ENCODE measurements at regions of chr17 and their contacts with region 1.

Region 1: GRCh38 chr17:42928714-42929496 is 28.3 kb downstream of the G6PC1 start:
- DNase-seq: peak; percentile 93 to 95
- ATAC-seq: peak; percentile 96 to 97
- H3K4me3 ChIP-seq: no peak overlapping the region
- H3K27ac ChIP-seq: peak overlapping the region; percentile 75 to 84
- H3K4me1 ChIP-seq: peaks cover 9% of the 10 kb centered on the region
- CTCF ChIP-seq: peak; percentile 74
- EP300 ChIP-seq: no peak
- POLR2A ChIP-seq: no peak
- RAD21 ChIP-seq: peak; percentile 82 to 84

Region 2: GRCh38 chr17:42677008-42677857 is 251.7 kb before region 1 on chr17:
- CTCF ChIA-PET with region 1: no interaction called
- POLR2A ChIA-PET with region 1: no interaction called
- DNase-seq: peak; percentile 100
- ATAC-seq: peak; percentile 45 to 64
- H3K4me3 ChIP-seq: peak overlapping the region; percentile 87
- H3K27ac ChIP-seq: peak overlapping the region; percentile 95 to 98
- H3K4me1 ChIP-seq: peaks cover 56% of the 10 kb centered on the region
- CTCF ChIP-seq: no peak
- EP300 ChIP-seq: peak in 1 of 2 experiments; percentile 18; a peak in 1 of 5 replicates
- POLR2A ChIP-seq: no peak
- RAD21 ChIP-seq: no peak; a peak in 2 of 5 replicates

Region 3: DNA sequence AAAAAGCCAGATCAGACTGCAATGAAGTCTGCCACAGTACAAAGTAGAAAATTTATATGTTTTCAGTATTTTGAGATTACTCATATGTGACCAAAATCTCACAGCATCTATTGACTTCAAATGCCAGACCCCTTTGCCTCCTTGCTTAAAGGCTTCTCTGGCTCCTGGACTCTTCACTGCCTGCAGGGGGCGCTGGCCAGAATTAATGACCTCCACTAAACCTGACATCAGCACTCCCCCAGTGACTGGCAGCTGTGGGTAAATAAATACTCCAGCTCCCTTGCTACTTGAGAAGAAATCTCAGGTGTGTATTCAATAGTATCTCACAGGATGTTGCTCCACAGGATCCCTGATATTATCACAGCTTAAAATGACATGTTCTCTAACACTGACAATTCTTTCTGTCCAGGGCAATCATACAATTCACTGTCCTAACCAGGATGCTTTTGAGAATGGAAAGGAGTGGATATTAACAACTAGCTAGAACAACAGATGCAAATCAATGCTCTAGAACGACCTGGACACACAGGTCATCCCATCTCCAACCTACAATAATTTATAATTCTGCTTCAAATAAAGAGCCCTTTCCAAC is 108.9 kb before region 1 on chr17:
- CTCF ChIA-PET with region 1: interaction called, 19 read pairs
- POLR2A ChIA-PET with region 1: interaction called, 8 read pairs
- DNase-seq: peak; percentile 84 to 85
- ATAC-seq: peak; percentile 44 to 66; a peak in 3 of 6 replicates
- H3K4me3 ChIP-seq: no peak overlapping the region
- H3K27ac ChIP-seq: no peak overlapping the region
- H3K4me1 ChIP-seq: peaks cover 21% of the 10 kb centered on the region
- CTCF ChIP-seq: peak; percentile 82
- EP300 ChIP-seq: no peak
- POLR2A ChIP-seq: no peak
- RAD21 ChIP-seq: peak; percentile 26 to 40; a peak in 2 of 5 replicates

Region 4: DNA sequence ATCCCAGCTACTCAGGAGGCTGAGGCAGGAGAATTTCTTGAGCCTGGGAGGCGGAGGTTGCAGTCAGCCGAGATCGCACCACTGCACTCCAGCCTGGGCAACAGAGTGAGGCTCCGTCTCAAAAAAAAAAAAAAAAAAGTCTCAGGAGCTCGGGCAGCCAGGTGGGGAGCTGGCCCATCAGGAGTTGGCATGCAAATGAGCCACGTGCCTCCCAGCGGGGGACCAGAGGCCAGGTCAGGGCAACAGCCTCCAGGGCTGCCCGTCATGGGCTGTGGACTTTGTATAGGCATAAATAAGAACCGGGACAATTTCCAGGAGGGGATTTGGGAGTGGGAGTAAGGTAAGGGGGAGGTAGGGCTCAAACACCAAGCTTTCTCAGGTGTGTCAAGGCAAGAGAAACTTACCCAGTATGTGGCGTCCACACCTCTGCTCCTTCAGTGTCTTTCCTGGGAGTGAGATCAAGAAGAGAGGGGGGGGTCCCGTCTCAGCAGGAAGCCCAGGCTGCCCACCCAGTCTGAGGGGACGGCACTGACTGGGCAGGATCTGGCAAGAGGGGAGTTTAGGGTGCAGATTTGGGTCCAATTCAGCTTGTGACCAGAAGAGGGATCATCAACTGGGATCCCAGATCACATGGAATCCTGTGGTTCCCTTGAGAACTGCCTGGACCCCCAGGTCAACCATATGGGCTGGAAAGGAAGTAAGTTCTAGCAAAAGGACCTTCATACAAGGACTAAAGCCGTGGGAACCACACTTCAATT is 50.6 kb before region 1 on chr17:
- CTCF ChIA-PET with region 1: interaction called, 18 read pairs
- POLR2A ChIA-PET with region 1: no interaction called
- DNase-seq: peak in 1 of 2 experiments; percentile 25
- ATAC-seq: peak; percentile 53 to 65; a peak in 4 of 6 replicates
- H3K4me3 ChIP-seq: no peak overlapping the region
- H3K27ac ChIP-seq: no peak overlapping the region
- H3K4me1 ChIP-seq: no peaks in the 10 kb centered on the region
- CTCF ChIP-seq: no peak
- EP300 ChIP-seq: no peak
- POLR2A ChIP-seq: no peak
- RAD21 ChIP-seq: no peak

Region 5: DNA sequence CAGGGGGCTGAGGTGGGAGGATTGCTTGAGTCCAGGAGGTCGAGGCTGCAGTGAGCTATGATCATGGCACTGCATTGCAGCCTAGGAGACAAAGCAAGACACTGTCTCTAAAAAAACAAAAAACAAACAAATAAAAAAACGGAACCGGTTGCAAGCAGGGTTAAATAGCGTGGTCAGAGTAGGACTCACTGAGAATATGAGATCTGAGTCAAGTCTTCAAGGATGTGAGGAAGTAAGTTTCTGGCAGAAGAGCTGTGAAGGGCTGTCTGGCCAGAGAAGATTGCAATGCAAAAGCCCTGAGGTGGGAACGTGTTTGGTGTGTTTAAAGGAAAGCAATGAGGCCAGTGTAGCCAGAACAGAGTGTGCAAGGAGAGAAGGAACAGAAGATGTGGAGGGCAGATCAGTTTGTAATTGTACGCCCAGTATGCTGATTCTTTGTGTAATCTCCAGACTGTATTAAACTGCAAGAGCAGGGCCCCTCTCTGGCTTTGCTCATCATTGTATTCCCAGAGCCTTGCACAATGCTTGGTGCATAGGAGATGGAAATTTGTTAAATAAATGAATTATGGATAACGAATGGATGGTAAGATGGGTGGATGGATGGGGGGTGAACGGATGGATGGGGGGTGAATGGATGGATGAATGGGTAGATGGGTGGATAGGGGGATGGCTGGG is 22.0 kb before region 1 on chr17:
- CTCF ChIA-PET with region 1: interaction called, 14 read pairs
- POLR2A ChIA-PET with region 1: no interaction called
- DNase-seq: no peak
- ATAC-seq: no peak
- H3K4me3 ChIP-seq: no peak overlapping the region
- H3K27ac ChIP-seq: no peak overlapping the region
- H3K4me1 ChIP-seq: no peaks in the 10 kb centered on the region
- CTCF ChIP-seq: no peak
- EP300 ChIP-seq: no peak
- POLR2A ChIP-seq: no peak
- RAD21 ChIP-seq: no peak

Region 6: GRCh38 chr17:42997984-42998938 is 69.4 kb after region 1 on chr17 and contains the start of gene RPL27:
- CTCF ChIA-PET with region 1: interaction called, 11 read pairs
- POLR2A ChIA-PET with region 1: interaction called, 12 read pairs
- DNase-seq: peak; percentile 96 to 100
- ATAC-seq: peak; percentile 92 to 95
- H3K4me3 ChIP-seq: peak within 1 kb of the TSS; percentile 66
- H3K27ac ChIP-seq: peak within 1 kb of the TSS; percentile 87 to 91
- H3K4me1 ChIP-seq: peaks cover 45% of the 10 kb centered on the region
- CTCF ChIP-seq: peak; percentile 88
- EP300 ChIP-seq: no peak; a peak in 1 of 5 replicates
- POLR2A ChIP-seq: peak; percentile 88
- RAD21 ChIP-seq: peak; percentile 79 to 84
- polyA plus RNA-seq, gene RPL27: 5,588 and 5,746 TPM in 2 replicates